Naive thymus-derived CD4-positive, alpha-beta T cell (primary cell): ENCODE measurements at regions of chr1 and their contacts with region 1.

Region 1: GRCh38 chr1:154272217-154272998 is at the start of gene HAX1:
- DNase-seq: peak; percentile 74 to 99 (median 97)
- ATAC-seq: peak; percentile 95
- H3K4me3 ChIP-seq: peak within 1 kb of the TSS; percentile 98
- H3K4me3 Mint-ChIP-seq: peak within 1 kb of the TSS; percentile 94 to 99 (median 97)
- H3K27ac ChIP-seq: peak within 1 kb of the TSS; percentile 92
- H3K27ac Mint-ChIP-seq: peak within 1 kb of the TSS; percentile 97 to 99 (median 99)
- H3K4me1 ChIP-seq: peaks cover 10 to 20% of the 10 kb centered on the region in 2 donors
- H3K4me1 Mint-ChIP-seq: peaks cover 20 to 47% (median 42%) of the 10 kb centered on the region in 7 donors
- H3K27me3 ChIP-seq: no peaks in the 10 kb centered on the region
- H3K27me3 Mint-ChIP-seq: no peaks in the 10 kb centered on the region
- total RNA-seq, gene HAX1: 71.9 to 111 (median 104) TPM

Region 2: DNA sequence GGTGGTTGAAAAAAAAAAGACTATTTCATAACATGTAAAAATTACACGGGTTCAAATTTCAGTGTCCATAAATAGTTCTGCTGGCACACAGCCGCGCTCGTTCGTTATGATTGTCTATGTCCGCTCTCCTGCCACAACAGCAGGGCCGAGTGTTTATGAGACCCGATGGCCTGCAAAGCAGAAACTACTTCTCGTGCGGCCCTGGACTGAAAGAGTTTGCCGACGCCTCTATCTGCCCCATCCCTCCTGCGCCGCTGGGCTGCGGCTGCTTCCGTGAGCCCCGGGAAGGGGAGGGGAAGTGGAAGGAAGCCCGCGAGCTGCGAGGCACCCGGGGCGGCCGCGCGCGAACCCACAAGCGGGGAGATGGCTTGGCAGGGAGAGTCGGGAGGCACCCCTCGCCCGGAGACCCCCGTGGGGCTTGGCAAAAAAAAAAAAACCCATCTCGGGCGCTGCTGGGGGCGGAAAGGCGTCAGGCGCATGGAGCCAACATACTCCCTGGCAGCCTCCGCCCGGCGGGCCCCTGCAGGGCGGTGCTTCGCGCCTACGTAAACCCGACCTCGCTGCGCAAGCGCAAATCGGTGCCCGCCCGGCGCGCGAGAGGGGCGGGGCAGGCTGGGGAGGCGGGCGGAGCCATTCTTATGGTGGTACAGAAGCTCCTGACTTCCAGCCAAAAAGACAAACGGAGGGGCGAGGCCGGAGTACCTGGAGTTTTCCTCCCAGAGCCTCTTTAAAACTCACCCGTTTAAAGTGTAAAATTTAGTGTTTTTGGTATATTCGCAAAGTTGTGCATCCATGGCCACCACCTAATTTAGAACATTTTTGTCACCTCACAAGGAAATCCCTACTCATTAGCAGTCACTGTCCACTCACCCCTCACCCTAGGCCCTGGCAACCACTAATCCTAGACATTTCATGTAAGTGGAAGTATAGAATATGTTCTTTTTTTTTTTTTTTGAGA is 488.9 kb before region 1 on chr1:
- CTCF ChIA-PET with region 1: no interaction called
- POLR2A ChIA-PET with region 1: no interaction called
- intact Hi-C with region 1: loop called in 1 of 2 experiments (anchors 1 kb)
- DNase-seq: peak; percentile 86 to 95 (median 92)
- ATAC-seq: peak; percentile 99
- H3K4me3 ChIP-seq: peak overlapping the region; percentile 78
- H3K4me3 Mint-ChIP-seq: peak overlapping the region; percentile 80 to 97 (median 90)
- H3K27ac ChIP-seq: peak overlapping the region; percentile 96
- H3K27ac Mint-ChIP-seq: peak overlapping the region; percentile 92 to 99 (median 95)
- H3K4me1 ChIP-seq: peaks cover 0 to 10% of the 10 kb centered on the region in 2 donors
- H3K4me1 Mint-ChIP-seq: peaks cover 0 to 17% (median 9%) of the 10 kb centered on the region in 7 donors
- H3K27me3 ChIP-seq: no peaks in the 10 kb centered on the region
- H3K27me3 Mint-ChIP-seq: peaks cover 0 to 6% (median 4%) of the 10 kb centered on the region in 5 donors

Region 3: GRCh38 chr1:153922972-153923925 is 349.2 kb before region 1 on chr1 and contains the start of gene GATAD2B:
- CTCF ChIA-PET with region 1: no interaction called
- POLR2A ChIA-PET with region 1: no interaction called
- intact Hi-C with region 1: loop called (anchors 1 kb)
- DNase-seq: peak; percentile 86 to 100 (median 99)
- ATAC-seq: peak; percentile 94
- H3K4me3 ChIP-seq: peak within 1 kb of the TSS; percentile 87
- H3K4me3 Mint-ChIP-seq: peak within 1 kb of the TSS; percentile 83 to 96 (median 94)
- H3K27ac ChIP-seq: peak within 1 kb of the TSS; percentile 97
- H3K27ac Mint-ChIP-seq: peak within 1 kb of the TSS; percentile 90 to 99 (median 97)
- H3K4me1 ChIP-seq: peaks cover 35% of the 10 kb centered on the region in 2 donors
- H3K4me1 Mint-ChIP-seq: peaks cover 31 to 53% (median 44%) of the 10 kb centered on the region in 7 donors
- H3K27me3 ChIP-seq: no peaks in the 10 kb centered on the region
- H3K27me3 Mint-ChIP-seq: peaks cover 0 to 3% (median 0%) of the 10 kb centered on the region in 5 donors
- total RNA-seq, gene GATAD2B: 67.3 to 102 (median 75.5) TPM

Region 4: DNA sequence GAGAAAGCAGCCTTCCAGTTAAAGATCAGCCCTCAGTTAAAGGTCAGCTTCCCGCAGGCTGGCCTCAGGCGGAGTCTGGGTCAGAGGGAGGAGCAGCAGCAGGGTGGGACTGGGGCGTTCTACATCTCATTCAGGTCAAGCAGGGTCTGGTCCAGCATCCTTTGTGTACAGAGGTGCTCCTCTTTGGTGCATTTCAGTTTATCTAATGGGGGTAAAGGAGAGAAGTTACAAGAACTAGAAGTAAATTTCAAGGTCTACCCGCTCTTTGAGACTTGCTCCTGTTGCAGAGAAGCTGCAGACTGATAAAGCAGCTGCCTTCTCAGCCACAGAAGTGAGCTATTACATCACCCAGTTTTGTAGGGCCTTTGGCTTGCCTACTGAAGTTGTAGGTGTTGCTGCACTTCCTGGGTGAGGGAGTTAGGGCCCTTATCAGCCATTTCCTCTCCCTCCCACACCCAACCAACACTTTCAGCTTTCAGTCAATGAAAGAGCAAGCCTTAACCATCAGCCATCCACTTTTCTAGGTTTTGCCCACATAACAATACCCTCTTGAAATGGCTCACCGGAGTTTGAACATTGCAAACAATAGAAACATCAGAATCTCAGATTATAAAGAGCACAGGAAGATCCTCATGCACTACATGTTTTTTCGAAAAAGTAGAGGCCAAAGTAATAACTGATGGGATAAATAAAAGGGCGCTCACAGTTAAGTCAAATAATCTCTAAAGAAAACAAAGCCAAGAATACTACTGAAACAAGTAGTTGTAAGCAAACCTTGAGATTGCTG is 114.7 kb before region 1 on chr1:
- CTCF ChIA-PET with region 1: no interaction called
- POLR2A ChIA-PET with region 1: interaction called, 4 read pairs
- intact Hi-C with region 1: loop called in 1 of 2 experiments (anchors 1 kb)
- DNase-seq: peak in 8 of 9 donors; percentile 71 to 90 (median 86)
- ATAC-seq: peak; percentile 98
- H3K4me3 ChIP-seq: peak overlapping the region; percentile 12
- H3K4me3 Mint-ChIP-seq: peak overlapping the region; percentile 71 to 90 (median 79)
- H3K27ac ChIP-seq: peak overlapping the region; percentile 74
- H3K27ac Mint-ChIP-seq: peak overlapping the region; percentile 89 to 97 (median 94)
- H3K4me1 ChIP-seq: peaks cover 34 to 71% of the 10 kb centered on the region in 2 donors
- H3K4me1 Mint-ChIP-seq: peaks cover 36 to 81% (median 69%) of the 10 kb centered on the region in 7 donors
- H3K27me3 ChIP-seq: no peaks in the 10 kb centered on the region
- H3K27me3 Mint-ChIP-seq: no peaks in the 10 kb centered on the region

Region 5: GRCh38 chr1:154324669-154325582 is 52.5 kb after region 1 on chr1 and contains the start of gene ATP8B2:
- CTCF ChIA-PET with region 1: interaction called, 4 read pairs
- POLR2A ChIA-PET with region 1: interaction called, 14 read pairs
- intact Hi-C with region 1: loop called (anchors 1 kb)
- DNase-seq: peak; percentile 60 to 82 (median 77)
- ATAC-seq: peak; percentile 80
- H3K4me3 ChIP-seq: peak within 1 kb of the TSS; percentile 79
- H3K4me3 Mint-ChIP-seq: peak within 1 kb of the TSS; percentile 92 to 98 (median 96)
- H3K27ac ChIP-seq: peak within 1 kb of the TSS; percentile 94
- H3K27ac Mint-ChIP-seq: peak within 1 kb of the TSS; percentile 80 to 95 (median 92)
- H3K4me1 ChIP-seq: peaks cover 24 to 36% of the 10 kb centered on the region in 2 donors
- H3K4me1 Mint-ChIP-seq: peaks cover 27 to 42% (median 38%) of the 10 kb centered on the region in 7 donors
- H3K27me3 ChIP-seq: no peaks in the 10 kb centered on the region
- H3K27me3 Mint-ChIP-seq: peaks cover 0 to 31% (median 0%) of the 10 kb centered on the region in 5 donors
- total RNA-seq, gene ATP8B2: 105 to 130 (median 117) TPM

Region 6: GRCh38 chr1:154404984-154405761 is 132.8 kb after region 1 on chr1 and contains the start of gene IL6R:
- CTCF ChIA-PET with region 1: no interaction called
- POLR2A ChIA-PET with region 1: interaction called, 4 read pairs
- intact Hi-C with region 1: loop called in 1 of 2 experiments (anchors 2 kb)
- DNase-seq: peak; percentile 63 to 83 (median 77)
- ATAC-seq: peak; percentile 70
- H3K4me3 ChIP-seq: peak within 1 kb of the TSS; percentile 72
- H3K4me3 Mint-ChIP-seq: peak within 1 kb of the TSS; percentile 88 to 98 (median 96)
- H3K27ac ChIP-seq: peak within 1 kb of the TSS; percentile 75
- H3K27ac Mint-ChIP-seq: peak within 1 kb of the TSS; percentile 77 to 99 (median 95)
- H3K4me1 ChIP-seq: peaks cover 51 to 68% of the 10 kb centered on the region in 2 donors
- H3K4me1 Mint-ChIP-seq: peaks cover 50 to 75% (median 68%) of the 10 kb centered on the region in 7 donors
- H3K27me3 ChIP-seq: no peaks in the 10 kb centered on the region
- H3K27me3 Mint-ChIP-seq: peaks cover 0 to 4% (median 0%) of the 10 kb centered on the region in 5 donors
- total RNA-seq, gene IL6R: 5.2 to 91.6 (median 85.6) TPM

Region 7: GRCh38 chr1:154639876-154640275 is 367.5 kb after region 1 on chr1:
- CTCF ChIA-PET with region 1: no interaction called
- POLR2A ChIA-PET with region 1: no interaction called
- intact Hi-C with region 1: no loop called
- DNase-seq: no peak
- ATAC-seq: no peak
- H3K4me3 ChIP-seq: no peak overlapping the region
- H3K4me3 Mint-ChIP-seq: no peak overlapping the region
- H3K27ac ChIP-seq: no peak overlapping the region
- H3K27ac Mint-ChIP-seq: no peak overlapping the region
- H3K4me1 ChIP-seq: no peaks in the 10 kb centered on the region
- H3K4me1 Mint-ChIP-seq: peaks cover 0 to 1% (median 0%) of the 10 kb centered on the region in 7 donors
- H3K27me3 ChIP-seq: peaks cover 0 to 4% of the 10 kb centered on the region in 2 donors
- H3K27me3 Mint-ChIP-seq: peaks cover 16 to 70% (median 27%) of the 10 kb centered on the region in 5 donors